MCF 10A (cell line): ENCODE measurements at regions of chr6 and their contacts with region 1.

Region 1: GRCh38 chr6:24494821-24495795 is at the start of gene ALDH5A1:
- DNase-seq: peak; percentile 50
- H3K4me3 Mint-ChIP-seq: peak within 1 kb of the TSS; percentile 69
- H3K27ac Mint-ChIP-seq: no peak within 1 kb of the TSS
- H3K4me1 Mint-ChIP-seq: no peaks in the 10 kb centered on the region
- H3K27me3 Mint-ChIP-seq: no peaks in the 10 kb centered on the region
- CTCF ChIP-seq: peak; percentile 21
- total RNA-seq, gene ALDH5A1: 1.7 and 2.0 TPM in 2 replicates

Region 2: DNA sequence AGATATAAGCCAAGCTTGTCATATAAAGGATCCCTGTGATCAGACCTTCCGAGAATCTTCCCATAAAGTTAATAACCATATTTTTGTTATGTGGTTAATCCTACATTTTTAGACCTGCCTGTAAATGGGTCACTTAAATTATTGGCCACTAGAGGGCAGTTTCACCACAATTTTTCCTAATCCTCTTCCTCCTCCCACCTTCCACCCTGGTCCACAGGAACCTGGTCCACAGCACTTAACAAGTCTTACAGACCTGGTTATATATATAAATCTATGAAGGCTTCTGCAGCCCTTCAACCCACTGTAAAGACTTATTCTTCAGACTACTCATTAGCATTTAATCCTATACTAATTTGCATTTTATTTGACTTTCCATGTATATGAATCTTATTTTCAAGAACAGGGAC is 64.1 kb before region 1 on chr6:
- CTCF ChIA-PET with region 1: interaction called, 4 read pairs
- POLR2A ChIA-PET with region 1: no interaction called
- intact Hi-C with region 1: loop called (anchors 10 kb)
- DNase-seq: peak; percentile 69
- H3K4me3 Mint-ChIP-seq: no peak overlapping the region
- H3K27ac Mint-ChIP-seq: no peak overlapping the region
- H3K4me1 Mint-ChIP-seq: peaks cover 6% of the 10 kb centered on the region
- H3K27me3 Mint-ChIP-seq: no peaks in the 10 kb centered on the region
- CTCF ChIP-seq: peak; percentile 27

Region 3: GRCh38 chr6:24481449-24481848 is 13.7 kb before region 1 on chr6:
- CTCF ChIA-PET with region 1: interaction called, 10 read pairs
- POLR2A ChIA-PET with region 1: interaction called, 7 read pairs
- intact Hi-C with region 1: no loop called
- DNase-seq: no peak
- H3K4me3 Mint-ChIP-seq: no peak overlapping the region
- H3K27ac Mint-ChIP-seq: no peak overlapping the region
- H3K4me1 Mint-ChIP-seq: no peaks in the 10 kb centered on the region
- H3K27me3 Mint-ChIP-seq: no peaks in the 10 kb centered on the region
- CTCF ChIP-seq: no peak

Region 4: DNA sequence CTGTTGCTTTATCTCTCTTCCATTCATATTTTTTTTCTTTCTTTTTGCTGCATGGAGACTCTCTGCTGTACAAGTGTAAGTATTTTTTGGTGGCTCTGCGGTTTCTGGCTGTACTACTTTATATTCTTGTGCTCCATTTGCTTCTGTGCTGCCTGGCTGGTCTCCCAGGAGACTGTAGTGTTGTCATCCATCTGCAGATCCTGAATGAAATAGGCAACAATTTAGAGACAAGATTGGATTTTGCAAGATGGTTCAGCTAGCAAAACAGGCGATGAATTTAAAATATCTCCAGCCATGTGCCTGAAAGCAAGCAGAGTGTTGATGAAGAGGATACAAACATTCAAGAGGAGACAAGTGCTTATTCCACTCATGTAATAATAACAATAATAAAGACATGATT is 1081.8 kb after region 1 on chr6:
- CTCF ChIA-PET with region 1: no interaction called
- POLR2A ChIA-PET with region 1: no interaction called
- intact Hi-C with region 1: no loop called
- DNase-seq: no peak
- H3K4me3 Mint-ChIP-seq: no peak overlapping the region
- H3K27ac Mint-ChIP-seq: no peak overlapping the region
- H3K4me1 Mint-ChIP-seq: no peaks in the 10 kb centered on the region
- H3K27me3 Mint-ChIP-seq: no peaks in the 10 kb centered on the region
- CTCF ChIP-seq: no peak